ENCODE measurements at regions of chr16 and their contacts with region 1.

Region 1: DNA sequence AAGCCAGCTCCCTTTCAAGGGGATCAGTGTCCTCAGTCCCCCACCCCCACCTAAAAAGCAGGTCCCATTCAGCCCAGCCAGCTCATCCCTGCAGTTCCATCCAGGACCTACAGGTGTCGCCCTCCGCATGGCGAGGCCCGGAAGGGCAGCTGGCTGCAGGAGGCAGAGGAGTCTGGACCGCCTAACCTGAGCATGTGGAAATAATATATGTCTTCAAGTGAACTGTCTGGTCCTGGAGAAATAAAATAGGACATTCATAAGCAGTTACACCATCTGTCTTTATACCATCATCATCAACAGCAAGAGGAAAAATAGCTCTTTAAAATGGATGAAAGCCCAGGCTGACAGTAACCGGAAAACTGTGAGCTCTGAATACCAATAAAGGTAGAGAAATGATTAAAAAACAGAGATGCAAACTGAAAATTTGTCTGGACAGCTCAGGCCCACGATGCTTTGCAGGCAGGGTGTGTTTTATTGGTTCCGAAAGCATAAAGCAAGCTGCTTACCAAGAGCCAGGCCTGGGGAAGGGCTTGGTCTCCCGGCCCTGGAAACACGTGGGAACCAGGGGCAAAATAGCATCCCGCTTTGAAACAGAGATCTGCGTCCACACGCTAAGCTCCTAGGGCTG is 215.2 kb downstream of the ZFHX3 start:
- DNase-seq: peak; percentile 78
- H3K4me3 Mint-ChIP-seq: no peak overlapping the region
- H3K27ac Mint-ChIP-seq: no peak overlapping the region
- H3K4me1 Mint-ChIP-seq: peaks cover 12% of the 10 kb centered on the region
- H3K27me3 Mint-ChIP-seq: peaks cover 3% of the 10 kb centered on the region

Region 2: GRCh38 chr16:72847187-72848027 is 14.7 kb after region 1 on chr16:
- CTCF ChIA-PET with region 1: interaction called, 30 read pairs
- DNase-seq: peak; percentile 49
- H3K4me3 Mint-ChIP-seq: no peak overlapping the region
- H3K27ac Mint-ChIP-seq: no peak overlapping the region
- H3K4me1 Mint-ChIP-seq: peaks cover 41% of the 10 kb centered on the region
- H3K27me3 Mint-ChIP-seq: peaks cover 30% of the 10 kb centered on the region

Region 3: DNA sequence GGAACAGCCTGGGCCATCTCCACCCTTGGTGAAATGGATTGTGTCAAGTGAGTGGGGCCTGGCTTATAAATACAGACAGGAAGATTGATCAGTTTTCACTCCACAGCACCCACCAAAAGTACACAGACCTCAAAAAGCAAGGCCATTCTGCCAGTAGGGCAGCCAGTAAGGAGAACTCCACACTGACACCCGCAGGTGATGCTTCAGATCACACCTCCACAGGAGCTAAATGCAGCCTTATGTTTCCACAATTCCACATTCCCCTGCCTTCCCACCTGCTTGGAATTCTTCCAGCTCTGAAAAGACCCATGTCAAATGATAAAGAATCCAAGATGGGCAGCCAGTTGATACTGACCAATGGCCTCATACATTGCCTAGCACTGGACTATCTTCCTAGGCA is 24.1 kb after region 1 on chr16:
- CTCF ChIA-PET with region 1: interaction called, 34 read pairs
- DNase-seq: peak; percentile 47
- H3K4me3 Mint-ChIP-seq: no peak overlapping the region
- H3K27ac Mint-ChIP-seq: no peak overlapping the region
- H3K4me1 Mint-ChIP-seq: peaks cover 19% of the 10 kb centered on the region
- H3K27me3 Mint-ChIP-seq: peaks cover 6% of the 10 kb centered on the region

Region 4: GRCh38 chr16:73196670-73197069 is 363.9 kb after region 1 on chr16:
- CTCF ChIA-PET with region 1: interaction called, 12 read pairs
- DNase-seq: peak; percentile 51
- H3K4me3 Mint-ChIP-seq: no peak overlapping the region
- H3K27ac Mint-ChIP-seq: no peak overlapping the region
- H3K4me1 Mint-ChIP-seq: no peaks in the 10 kb centered on the region
- H3K27me3 Mint-ChIP-seq: peaks cover 8% of the 10 kb centered on the region

Measured in activated naive CD4-positive, alpha-beta T cell treated with anti-CD3 and anti-CD28 coated beads, Interleukin-2, amount 10 ng/mL, durations not matched to agents 7 days and 5 days (primary cell).